Activated B cell treated with CpG ODN at 0.5 μM for 24 hours (primary cell): ENCODE measurements at regions of chr12 and their contacts with region 1.

Region 1: DNA sequence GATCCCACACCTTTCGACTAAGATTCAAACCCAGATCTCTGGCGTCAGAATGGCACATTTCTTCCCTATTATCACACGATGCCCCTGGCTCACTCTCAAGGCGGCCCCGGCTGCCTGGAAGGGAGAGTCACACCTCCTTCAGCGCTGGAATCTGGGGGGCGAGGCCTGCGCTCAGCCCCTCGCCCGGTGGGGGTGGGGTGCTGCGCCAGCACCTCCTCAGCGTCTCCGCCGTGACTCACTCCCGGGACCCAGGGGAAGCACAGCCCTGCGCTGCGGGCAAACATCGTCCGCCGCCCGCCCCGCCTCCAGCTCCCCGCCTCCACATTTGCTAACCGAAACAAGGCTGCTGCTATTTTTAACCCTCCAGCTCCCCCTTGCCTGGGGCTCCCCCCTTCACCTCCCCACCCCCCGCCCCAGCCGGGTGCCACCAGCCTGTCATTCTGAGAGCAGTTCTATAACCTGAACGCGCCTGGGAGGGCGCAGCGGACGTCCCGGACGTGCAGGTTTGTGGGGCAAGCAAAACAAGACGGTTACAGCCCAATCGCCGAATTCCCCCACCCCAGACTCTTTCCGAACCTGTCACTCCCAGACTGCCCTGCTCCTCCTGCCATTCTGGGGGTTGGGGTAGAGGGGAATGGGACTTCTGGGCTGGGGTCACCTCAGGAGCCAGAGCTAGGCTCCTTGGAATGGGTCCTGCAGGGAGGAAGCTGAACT is 6.7 kb downstream of the HDAC7 start:
- DNase-seq: peak; percentile 83
- ATAC-seq: peak; percentile 74
- H3K4me3 Mint-ChIP-seq: peak overlapping the region; percentile 84
- H3K27ac Mint-ChIP-seq: peak overlapping the region; percentile 99
- H3K4me1 Mint-ChIP-seq: peaks cover 97% of the 10 kb centered on the region
- H3K27me3 Mint-ChIP-seq: no peaks in the 10 kb centered on the region
- CTCF ChIP-seq: no peak

Region 2: GRCh38 chr12:47216150-47216677 is 596.7 kb before region 1 on chr12:
- CTCF ChIA-PET with region 1: no interaction called
- POLR2A ChIA-PET with region 1: no interaction called
- intact Hi-C with region 1: loop called (anchors 5 kb)
- DNase-seq: peak; percentile 42
- ATAC-seq: peak; percentile 80
- H3K4me3 Mint-ChIP-seq: peak overlapping the region; percentile 88
- H3K27ac Mint-ChIP-seq: peak overlapping the region; percentile 96
- H3K4me1 Mint-ChIP-seq: peaks cover 77% of the 10 kb centered on the region
- H3K27me3 Mint-ChIP-seq: no peaks in the 10 kb centered on the region
- CTCF ChIP-seq: no peak

Region 3: DNA sequence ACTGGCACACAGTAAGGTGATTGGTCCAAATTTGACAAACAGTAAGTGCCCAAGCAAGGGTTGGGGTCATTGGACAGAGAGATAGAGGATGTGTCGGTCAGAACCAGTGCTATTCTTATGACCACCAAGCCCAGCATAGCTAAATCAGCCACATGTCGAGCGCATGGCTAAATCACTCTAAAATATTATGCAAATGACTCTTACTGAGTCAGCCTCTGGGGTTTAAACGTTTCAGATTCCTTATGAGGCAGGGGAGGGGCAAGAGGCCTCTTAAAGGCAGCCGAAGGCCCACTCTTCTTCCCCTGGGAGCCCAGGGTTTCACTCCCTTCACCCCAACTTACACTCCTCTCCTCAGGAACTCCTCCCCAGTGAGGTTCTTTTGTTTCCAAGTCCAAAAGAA is 87.1 kb before region 1 on chr12:
- CTCF ChIA-PET with region 1: no interaction called
- POLR2A ChIA-PET with region 1: interaction called, 10 read pairs
- intact Hi-C with region 1: no loop called
- DNase-seq: no peak
- ATAC-seq: peak; percentile 92
- H3K4me3 Mint-ChIP-seq: no peak overlapping the region
- H3K27ac Mint-ChIP-seq: peak overlapping the region; percentile 65
- H3K4me1 Mint-ChIP-seq: peaks cover 37% of the 10 kb centered on the region
- H3K27me3 Mint-ChIP-seq: no peaks in the 10 kb centered on the region
- CTCF ChIP-seq: no peak

Region 4: DNA sequence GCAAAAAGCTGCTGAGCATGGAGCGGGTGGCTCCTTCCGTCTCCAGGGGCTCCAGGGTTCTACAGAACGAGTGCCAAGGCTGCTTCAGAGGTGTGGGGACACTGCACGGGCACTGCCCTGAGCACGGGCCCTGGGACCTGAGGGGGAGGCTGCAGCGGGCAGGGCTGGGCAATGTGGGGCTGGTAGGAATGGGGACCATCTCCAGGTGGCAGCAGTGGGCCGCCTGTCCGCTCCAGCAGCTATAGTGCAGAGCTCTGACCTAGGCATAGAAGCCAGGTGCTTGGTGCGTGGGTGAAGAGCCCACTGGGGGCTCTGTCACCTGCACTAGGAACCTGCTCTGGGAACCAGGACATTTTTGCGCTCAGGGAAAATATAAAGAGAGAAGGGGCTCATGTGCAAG is 15.5 kb before region 1 on chr12:
- CTCF ChIA-PET with region 1: interaction called, 23 read pairs
- POLR2A ChIA-PET with region 1: interaction called, 27 read pairs
- intact Hi-C with region 1: loop called (anchors 1 kb)
- DNase-seq: peak; percentile 46
- ATAC-seq: peak; percentile 91
- H3K4me3 Mint-ChIP-seq: no peak overlapping the region
- H3K27ac Mint-ChIP-seq: peak overlapping the region; percentile 80
- H3K4me1 Mint-ChIP-seq: peaks cover 23% of the 10 kb centered on the region
- H3K27me3 Mint-ChIP-seq: no peaks in the 10 kb centered on the region
- CTCF ChIP-seq: no peak

Region 5: DNA sequence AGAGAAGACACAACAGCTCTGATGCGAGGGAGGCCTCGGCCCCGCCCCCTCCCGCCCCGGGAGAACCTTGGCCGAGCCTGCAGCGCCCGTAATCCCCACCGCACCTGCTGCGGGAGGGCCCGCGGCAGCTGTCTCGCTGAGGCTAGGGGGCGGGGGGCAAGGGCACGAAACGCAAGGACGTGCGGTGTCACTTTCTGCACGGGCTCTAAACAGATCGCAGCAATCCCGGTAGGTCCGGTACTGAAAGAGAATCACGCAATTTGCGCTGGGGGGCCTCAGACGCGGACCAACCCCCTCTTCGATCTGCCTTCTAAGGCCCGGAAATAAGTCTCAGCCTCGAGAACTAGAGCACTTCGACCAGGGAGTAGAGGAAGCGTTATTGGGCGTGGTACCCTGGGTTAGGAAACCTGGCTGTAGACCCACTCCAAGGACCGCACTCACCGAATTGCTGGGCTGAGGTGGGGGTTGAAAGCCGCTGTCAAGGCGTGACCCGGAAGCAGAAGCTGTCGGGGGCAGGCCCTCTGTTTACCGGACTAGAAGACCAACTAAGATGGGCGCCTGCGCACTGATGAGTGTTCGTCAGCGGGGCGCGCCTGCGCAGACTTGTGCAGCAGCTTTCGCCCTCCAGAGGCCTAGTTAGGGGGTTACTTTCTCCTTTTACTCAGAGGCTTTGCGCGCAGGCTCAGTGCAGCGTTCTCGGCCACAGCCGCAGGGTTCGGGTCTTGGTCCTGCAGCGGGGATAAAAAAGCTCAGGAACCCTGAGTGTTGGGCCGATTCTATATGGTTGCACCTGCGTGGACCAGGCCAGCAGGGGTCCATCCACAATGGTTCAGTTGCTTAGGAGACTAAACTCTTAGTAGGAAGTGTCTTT is 344.3 kb after region 1 on chr12 and contains the start of gene ASB8:
- CTCF ChIA-PET with region 1: no interaction called
- POLR2A ChIA-PET with region 1: interaction called, 7 read pairs
- intact Hi-C with region 1: loop called (anchors 5 kb)
- DNase-seq: peak; percentile 96
- ATAC-seq: peak; percentile 93
- H3K4me3 Mint-ChIP-seq: peak within 1 kb of the TSS; percentile 96
- H3K27ac Mint-ChIP-seq: peak within 1 kb of the TSS; percentile 97
- H3K4me1 Mint-ChIP-seq: peaks cover 26% of the 10 kb centered on the region
- H3K27me3 Mint-ChIP-seq: peaks cover 2% of the 10 kb centered on the region
- CTCF ChIP-seq: no peak
- total RNA-seq, gene ASB8: 40.0 and 43.6 TPM in 2 replicates